ENCODE measurements at regions of chr3 and their contacts with region 1.

Region 1: DNA sequence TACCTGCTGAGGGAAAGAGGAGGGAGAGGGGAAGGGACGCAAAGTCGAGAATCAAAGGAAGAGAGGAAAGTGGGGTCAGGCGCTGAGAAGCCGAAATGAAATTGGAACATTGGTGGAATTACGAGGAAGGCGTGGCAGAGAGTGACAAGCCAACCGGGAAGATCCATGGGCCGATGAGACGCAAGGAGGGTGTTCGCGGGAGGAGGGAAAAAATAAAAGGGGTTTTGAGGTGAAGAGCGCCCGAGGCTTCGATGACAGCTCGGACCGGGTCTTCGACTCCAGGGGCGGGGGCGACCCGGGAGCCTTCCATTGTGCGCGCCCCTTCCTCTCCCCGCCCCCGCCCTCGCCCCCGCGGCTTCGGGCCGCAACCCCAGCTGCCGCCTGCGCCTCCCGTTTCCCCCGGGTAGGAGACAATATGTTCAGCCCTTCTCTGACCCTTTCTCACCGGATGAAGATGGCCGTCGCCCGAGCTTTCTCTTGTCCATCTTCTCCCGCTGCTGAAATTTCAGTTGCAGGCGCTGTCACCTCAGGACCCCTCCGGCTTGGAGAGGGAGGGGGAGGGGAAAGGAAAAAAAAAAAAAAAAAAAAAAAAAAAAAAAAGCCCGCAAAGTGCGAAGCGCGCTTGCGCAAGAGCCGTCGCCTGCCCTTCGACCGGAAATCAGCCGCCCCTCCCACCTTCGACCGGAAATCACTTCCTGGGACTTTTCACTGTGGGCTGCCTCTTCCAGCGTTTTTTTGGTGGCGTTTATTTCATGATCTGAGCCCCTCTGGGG is at the start of gene SENP7:
- DNase-seq: peak; percentile 75 to 81 (median 77)
- H3K4me3 ChIP-seq: peak within 1 kb of the TSS; percentile 83 to 88
- H3K4me3 Mint-ChIP-seq: peak within 1 kb of the TSS; percentile 98 to 100 (median 99)
- H3K27ac ChIP-seq: peak within 1 kb of the TSS; percentile 84
- H3K27ac Mint-ChIP-seq: peak within 1 kb of the TSS; percentile 98 to 100 (median 99)
- H3K4me1 ChIP-seq: peaks cover 54% of the 10 kb centered on the region
- H3K4me1 Mint-ChIP-seq: peaks cover 24 to 73% (median 51%) of the 10 kb centered on the region in 4 donors
- H3K27me3 ChIP-seq: no peaks in the 10 kb centered on the region
- H3K27me3 Mint-ChIP-seq: peaks cover 1 to 2% of the 10 kb centered on the region in 2 donors
- total RNA-seq, gene SENP7: 69.7 to 69.8 TPM

Region 2: GRCh38 chr3:100968932-100969906 is 543.6 kb before region 1 on chr3:
- CTCF ChIA-PET with region 1: no interaction called
- POLR2A ChIA-PET with region 1: no interaction called
- intact Hi-C with region 1: no loop called
- DNase-seq: no peak
- H3K4me3 ChIP-seq: no peak overlapping the region
- H3K4me3 Mint-ChIP-seq: no peak overlapping the region
- H3K27ac ChIP-seq: no peak overlapping the region
- H3K27ac Mint-ChIP-seq: no peak overlapping the region
- H3K4me1 ChIP-seq: no peaks in the 10 kb centered on the region
- H3K4me1 Mint-ChIP-seq: no peaks in the 10 kb centered on the region
- H3K27me3 ChIP-seq: no peaks in the 10 kb centered on the region
- H3K27me3 Mint-ChIP-seq: peaks cover 0 to 7% of the 10 kb centered on the region in 2 donors

Region 3: DNA sequence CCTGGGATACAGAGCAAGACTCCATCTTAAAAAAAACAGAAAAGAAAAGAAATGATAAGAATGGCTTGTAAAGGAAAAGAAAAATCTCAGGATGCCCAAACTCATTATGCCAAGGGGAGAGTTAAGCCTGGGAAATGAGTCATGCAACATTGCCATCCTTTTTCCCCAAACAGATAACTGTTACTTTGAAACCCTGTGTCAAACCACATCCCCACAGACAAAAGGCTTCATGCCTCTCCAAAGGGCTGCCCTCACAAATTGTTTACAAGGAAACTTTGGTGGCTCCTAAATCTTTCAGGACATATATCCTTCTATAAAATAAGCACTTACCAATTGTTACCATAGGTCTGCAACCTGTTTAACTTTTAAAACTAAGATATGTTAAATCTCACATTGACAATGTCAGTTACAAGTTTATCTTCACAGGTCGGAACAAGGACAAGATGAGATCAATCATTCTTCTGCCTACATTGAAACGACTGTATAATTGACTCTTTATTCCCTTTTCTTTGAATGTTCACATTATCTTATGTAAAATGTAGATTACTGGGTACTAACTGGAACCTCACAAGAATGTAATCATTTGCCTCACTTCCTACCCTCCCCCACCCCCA is 18.7 kb after region 1 on chr3:
- CTCF ChIA-PET with region 1: interaction called, 4 read pairs
- POLR2A ChIA-PET with region 1: interaction called, 32 read pairs
- intact Hi-C with region 1: loop called (anchors 2 kb)
- DNase-seq: peak in 2 of 5 donors; percentile 21 to 51
- H3K4me3 ChIP-seq: no peak overlapping the region
- H3K4me3 Mint-ChIP-seq: peak overlapping the region in 6 of 8 donors; percentile 9 to 72 (median 46)
- H3K27ac ChIP-seq: no peak overlapping the region
- H3K27ac Mint-ChIP-seq: peak overlapping the region; percentile 63 to 93 (median 89)
- H3K4me1 ChIP-seq: peaks cover 40% of the 10 kb centered on the region
- H3K4me1 Mint-ChIP-seq: peaks cover 35 to 42% (median 41%) of the 10 kb centered on the region in 4 donors
- H3K27me3 ChIP-seq: no peaks in the 10 kb centered on the region
- H3K27me3 Mint-ChIP-seq: no peaks in the 10 kb centered on the region

Region 4: DNA sequence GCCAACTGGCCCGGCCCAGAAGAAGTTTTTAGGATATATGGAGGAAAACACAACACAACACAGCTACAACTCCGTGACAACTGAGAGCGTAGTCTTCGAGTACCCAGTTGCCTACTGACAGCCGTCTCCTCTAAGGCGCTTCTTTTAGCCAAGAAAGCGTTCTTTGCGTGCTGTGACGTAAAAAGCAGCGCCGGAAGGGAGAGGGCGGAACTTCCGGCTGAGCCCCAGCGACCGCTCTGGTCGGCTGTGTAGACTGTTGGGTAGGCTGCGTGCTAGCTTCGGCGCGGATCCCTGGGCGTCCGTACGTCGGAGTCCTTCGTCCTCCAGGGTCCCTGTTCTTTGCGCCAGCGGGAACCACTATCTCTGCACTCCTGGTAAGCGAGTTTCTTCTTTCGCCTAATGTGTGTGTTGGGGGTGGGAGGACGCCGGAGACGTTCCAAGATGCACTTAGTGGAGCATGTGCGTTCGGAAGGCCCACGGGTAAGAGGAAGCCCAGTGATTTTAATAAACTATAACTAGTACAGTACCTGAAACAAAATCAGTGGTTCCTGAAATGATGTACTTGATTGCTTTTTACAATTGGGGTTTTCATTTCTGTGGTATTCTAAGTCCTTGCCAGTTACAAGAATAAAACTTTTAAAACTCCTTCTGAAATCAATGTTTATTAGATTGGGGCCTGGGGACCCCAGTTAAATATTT is 48.9 kb after region 1 on chr3 and contains the start of gene TRMT10C:
- CTCF ChIA-PET with region 1: interaction called, 3 read pairs
- POLR2A ChIA-PET with region 1: interaction called, 34 read pairs
- intact Hi-C with region 1: loop called (anchors 1 kb)
- DNase-seq: peak; percentile 91 to 95 (median 93)
- H3K4me3 ChIP-seq: peak within 1 kb of the TSS; percentile 95 to 100
- H3K4me3 Mint-ChIP-seq: peak within 1 kb of the TSS; percentile 97 to 100 (median 99)
- H3K27ac ChIP-seq: peak within 1 kb of the TSS; percentile 79
- H3K27ac Mint-ChIP-seq: peak within 1 kb of the TSS; percentile 95 to 99 (median 99)
- H3K4me1 ChIP-seq: peaks cover 22% of the 10 kb centered on the region
- H3K4me1 Mint-ChIP-seq: peaks cover 13 to 41% (median 30%) of the 10 kb centered on the region in 4 donors
- H3K27me3 ChIP-seq: no peaks in the 10 kb centered on the region
- H3K27me3 Mint-ChIP-seq: peaks cover 4% of the 10 kb centered on the region in 2 donors
- total RNA-seq, gene TRMT10C: 23.3 to 24.8 TPM

Region 5: GRCh38 chr3:102024270-102024904 is 511.6 kb after region 1 on chr3:
- CTCF ChIA-PET with region 1: no interaction called
- POLR2A ChIA-PET with region 1: no interaction called
- intact Hi-C with region 1: no loop called
- DNase-seq: no peak
- H3K4me3 ChIP-seq: no peak overlapping the region
- H3K4me3 Mint-ChIP-seq: no peak overlapping the region
- H3K27ac ChIP-seq: no peak overlapping the region
- H3K27ac Mint-ChIP-seq: no peak overlapping the region
- H3K4me1 ChIP-seq: peaks cover 4% of the 10 kb centered on the region
- H3K4me1 Mint-ChIP-seq: peaks cover 0 to 4% (median 2%) of the 10 kb centered on the region in 4 donors
- H3K27me3 ChIP-seq: no peaks in the 10 kb centered on the region
- H3K27me3 Mint-ChIP-seq: peaks cover 0 to 4% of the 10 kb centered on the region in 2 donors